MCF 10A (cell line): ENCODE measurements at regions of chr1 and their contacts with region 1.

Region 1: GRCh38 chr1:207565546-207566358 is 69.8 kb downstream of the CR1 start:
- DNase-seq: peak; percentile 65
- H3K4me3 Mint-ChIP-seq: no peak overlapping the region
- H3K27ac Mint-ChIP-seq: no peak overlapping the region
- H3K4me1 Mint-ChIP-seq: no peaks in the 10 kb centered on the region
- H3K27me3 Mint-ChIP-seq: peaks cover 32% of the 10 kb centered on the region
- CTCF ChIP-seq: peak; percentile 59

Region 2: DNA sequence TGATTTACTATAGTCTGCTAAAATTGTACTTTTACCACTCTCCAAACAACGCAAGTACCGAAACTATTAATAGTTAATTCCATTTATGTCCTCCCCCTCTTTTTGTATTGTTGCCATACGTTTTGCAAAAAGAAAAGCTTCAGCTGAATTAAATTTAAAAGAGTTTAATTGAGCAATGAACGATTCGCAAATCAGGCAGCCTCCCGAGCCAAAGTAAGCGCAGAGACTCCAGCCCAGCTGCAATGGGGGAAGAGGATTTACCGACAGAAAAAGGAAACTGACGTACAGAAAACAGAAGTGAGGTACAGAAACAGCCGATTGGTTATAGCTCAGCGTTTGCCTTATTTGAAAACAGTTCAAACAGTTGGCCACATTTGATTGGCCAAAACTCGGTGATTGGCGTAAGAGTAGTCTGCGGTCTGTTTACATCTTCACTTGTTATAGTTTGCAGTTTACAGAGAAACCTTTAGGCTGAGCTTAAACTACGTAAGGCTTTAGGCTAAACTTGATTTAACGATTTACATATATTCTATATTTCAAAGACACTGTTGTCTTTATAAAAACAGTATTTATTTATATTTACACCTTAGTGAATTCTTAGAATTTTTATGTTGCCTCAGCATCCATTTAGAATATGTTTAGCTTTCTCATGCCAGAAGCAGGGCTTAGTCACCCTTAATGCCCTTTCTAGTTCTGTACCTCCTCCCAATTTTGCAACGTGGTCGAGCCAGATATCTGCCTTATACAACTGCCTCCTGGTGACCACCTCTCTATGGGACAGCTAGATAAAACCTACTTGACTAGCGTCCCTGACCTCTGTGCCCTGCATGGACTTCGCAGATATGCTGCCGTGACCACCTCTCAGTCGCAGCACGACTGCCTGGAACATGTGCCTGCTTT is 46.0 kb before region 1 on chr1:
- CTCF ChIA-PET with region 1: interaction called, 11 read pairs
- POLR2A ChIA-PET with region 1: no interaction called
- intact Hi-C with region 1: no loop called
- DNase-seq: no peak
- H3K4me3 Mint-ChIP-seq: no peak overlapping the region
- H3K27ac Mint-ChIP-seq: no peak overlapping the region
- H3K4me1 Mint-ChIP-seq: no peaks in the 10 kb centered on the region
- H3K27me3 Mint-ChIP-seq: peaks cover 45% of the 10 kb centered on the region
- CTCF ChIP-seq: no peak

Region 3: GRCh38 chr1:207654320-207654719 is 88.6 kb after region 1 on chr1:
- CTCF ChIA-PET with region 1: no interaction called
- POLR2A ChIA-PET with region 1: no interaction called
- intact Hi-C with region 1: no loop called
- DNase-seq: no peak
- H3K4me3 Mint-ChIP-seq: no peak overlapping the region
- H3K27ac Mint-ChIP-seq: no peak overlapping the region
- H3K4me1 Mint-ChIP-seq: no peaks in the 10 kb centered on the region
- H3K27me3 Mint-ChIP-seq: peaks cover 15% of the 10 kb centered on the region
- CTCF ChIP-seq: peak; percentile 28

Region 4: DNA sequence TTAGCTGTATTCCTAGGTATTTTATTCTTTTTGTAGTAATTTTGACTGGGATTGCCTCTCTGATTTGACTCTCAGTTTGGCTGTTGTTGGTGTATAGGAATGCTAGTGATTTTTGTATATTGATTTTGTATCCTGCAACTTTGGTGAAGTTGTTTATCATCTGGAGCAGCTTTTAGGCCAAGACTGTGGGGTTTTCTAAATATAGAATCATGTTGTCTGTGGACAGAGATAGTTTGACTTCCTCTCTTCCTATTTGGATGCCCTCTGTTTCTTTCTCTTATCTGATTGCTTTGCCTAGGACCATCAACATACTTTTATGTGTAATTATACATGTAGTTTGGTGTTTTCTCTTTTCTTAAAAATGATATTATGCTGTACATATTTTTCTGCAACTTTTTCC is 213.3 kb after region 1 on chr1:
- CTCF ChIA-PET with region 1: no interaction called
- POLR2A ChIA-PET with region 1: no interaction called
- intact Hi-C with region 1: no loop called
- DNase-seq: no peak
- H3K4me3 Mint-ChIP-seq: no peak overlapping the region
- H3K27ac Mint-ChIP-seq: no peak overlapping the region
- H3K4me1 Mint-ChIP-seq: peaks cover 4% of the 10 kb centered on the region
- H3K27me3 Mint-ChIP-seq: no peaks in the 10 kb centered on the region
- CTCF ChIP-seq: no peak